CD14-positive monocyte (primary cell): ENCODE measurements at regions of chr6 and their contacts with region 1.

Region 1: DNA sequence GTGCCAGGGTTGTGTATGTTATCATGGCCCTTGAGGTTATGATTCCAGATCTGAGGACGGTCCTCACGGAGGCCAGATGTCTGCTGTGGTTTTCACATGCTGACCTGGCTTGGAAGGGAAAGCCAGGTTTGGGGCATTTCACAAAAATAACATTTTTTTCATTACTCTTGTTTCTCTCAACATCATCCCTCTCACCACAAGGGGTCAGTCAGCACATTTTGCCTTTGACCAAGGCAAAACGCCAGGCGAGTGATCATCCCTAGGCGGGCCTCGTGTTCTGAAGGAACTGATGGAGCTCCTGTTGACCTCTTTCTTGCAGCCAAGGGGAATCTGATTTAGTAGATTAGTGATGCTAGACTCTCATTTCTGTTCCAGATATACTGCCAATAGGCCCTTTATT is 133.5 kb downstream of the TBC1D7 start:
- DNase-seq: peak; percentile 68 to 74 (median 70)
- H3K4me3 ChIP-seq: no peak overlapping the region
- H3K4me3 Mint-ChIP-seq: peak overlapping the region in 1 of 2 donors; percentile 20
- H3K27ac ChIP-seq: no peak overlapping the region
- H3K27ac Mint-ChIP-seq: peak overlapping the region in 3 of 7 donors; percentile 19 to 72 (median 54)
- H3K4me1 ChIP-seq: no peaks in the 10 kb centered on the region
- H3K4me1 Mint-ChIP-seq: peaks cover 7% of the 10 kb centered on the region
- H3K27me3 ChIP-seq: no peaks in the 10 kb centered on the region
- H3K27me3 Mint-ChIP-seq: peaks cover 0 to 2% (median 0%) of the 10 kb centered on the region in 3 donors
- CTCF ChIP-seq: peak; percentile 77

Region 2: GRCh38 chr6:13272131-13273046 is 77.5 kb after region 1 on chr6:
- intact Hi-C with region 1: loop called in 1 of 2 experiments (anchors 5 kb)
- DNase-seq: peak; percentile 88 to 96 (median 95)
- H3K4me3 ChIP-seq: peak overlapping the region; percentile 46 to 100 (median 74)
- H3K4me3 Mint-ChIP-seq: peak overlapping the region; percentile 93 to 94
- H3K27ac ChIP-seq: peak overlapping the region; percentile 84 to 92
- H3K27ac Mint-ChIP-seq: peak overlapping the region; percentile 97 to 99 (median 99)
- H3K4me1 ChIP-seq: peaks cover 64 to 73% of the 10 kb centered on the region in 2 donors
- H3K4me1 Mint-ChIP-seq: peaks cover 71% of the 10 kb centered on the region
- H3K27me3 ChIP-seq: no peaks in the 10 kb centered on the region
- H3K27me3 Mint-ChIP-seq: peaks cover 0 to 2% (median 0%) of the 10 kb centered on the region in 3 donors
- CTCF ChIP-seq: no peak